WTC11 (cell line): ENCODE measurements at regions of chr2 and their contacts with region 1.

Region 1: GRCh38 chr2:126643431-126643830 is 12.5 kb upstream of the GYPC start:
- DNase-seq: peak; percentile 23
- ATAC-seq: peak; percentile 94
- H3K4me3 Mint-ChIP-seq: no peak overlapping the region
- H3K27ac Mint-ChIP-seq: no peak overlapping the region
- H3K4me1 Mint-ChIP-seq: peaks cover 20% of the 10 kb centered on the region
- H3K27me3 Mint-ChIP-seq: no peaks in the 10 kb centered on the region; the same call in none of the 2 replicates
- CTCF ChIP-seq: no peak

Region 2: DNA sequence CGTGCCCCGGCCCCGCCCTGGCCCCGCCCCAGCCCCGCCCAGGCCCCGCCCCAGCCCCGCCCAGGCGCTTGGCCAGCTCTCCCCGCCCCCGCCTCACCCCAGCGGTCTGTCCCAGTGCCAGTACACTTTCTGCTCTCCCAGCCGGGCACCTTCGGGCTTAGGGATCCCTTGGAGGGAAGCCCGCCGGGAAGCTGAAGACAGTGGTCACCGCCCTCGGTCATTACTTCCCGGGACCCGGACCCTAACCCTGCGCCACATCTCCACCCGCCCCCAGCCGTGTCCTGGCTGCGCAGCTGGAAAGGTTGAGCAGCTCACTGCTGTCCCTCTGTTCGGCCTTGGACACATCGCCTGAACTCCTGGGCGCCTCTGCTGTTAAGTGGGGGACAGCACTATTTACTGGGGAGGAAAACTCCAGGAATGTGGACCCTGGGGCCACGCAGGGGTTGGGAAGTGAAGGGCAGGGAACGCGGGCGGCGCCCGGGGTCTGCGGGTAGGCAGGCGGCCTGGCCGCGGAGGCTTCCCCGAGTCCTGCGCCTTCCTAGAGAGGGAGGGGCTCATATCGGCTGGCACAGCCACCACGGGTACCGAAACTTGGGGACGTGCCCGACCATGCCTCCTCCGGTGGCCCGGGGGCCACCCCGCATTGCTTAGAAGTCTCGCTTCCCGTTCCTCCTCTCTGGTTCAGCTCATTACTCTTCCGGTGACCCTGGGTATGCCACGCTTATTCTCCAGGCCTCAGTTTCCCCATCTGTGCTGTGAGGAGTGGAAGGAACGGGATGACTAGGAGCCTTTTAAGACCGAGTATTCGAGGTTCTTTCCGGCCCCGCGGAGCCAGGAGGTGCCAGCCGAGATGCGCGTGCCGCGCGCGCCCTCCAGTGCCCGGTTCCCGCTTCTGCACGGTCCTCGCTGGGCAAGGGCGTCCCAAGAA is 133.5 kb after region 1 on chr2:
- CTCF ChIA-PET with region 1: interaction called, 12 read pairs
- POLR2A ChIA-PET with region 1: no interaction called
- DNase-seq: peak; percentile 84
- ATAC-seq: peak; percentile 78
- H3K4me3 Mint-ChIP-seq: peak overlapping the region; percentile 82
- H3K27ac Mint-ChIP-seq: no peak overlapping the region
- H3K4me1 Mint-ChIP-seq: peaks cover 11% of the 10 kb centered on the region; the same call in 1 of the 2 replicates
- H3K27me3 Mint-ChIP-seq: peaks cover 17% of the 10 kb centered on the region
- CTCF ChIP-seq: peak; percentile 79